Mammary epithelial cell (primary cell): ENCODE measurements at regions of chr2 and their contacts with region 1.

Region 1: GRCh38 chr2:95728878-95729596 is 137.2 kb downstream of the TRIM43 start:
- DNase-seq: peak; percentile 75
- H3K4me3 ChIP-seq: no peak overlapping the region
- H3K27ac ChIP-seq: no peak overlapping the region
- H3K4me1 ChIP-seq: no peaks in the 10 kb centered on the region
- H3K27me3 ChIP-seq: peaks cover 2% of the 10 kb centered on the region
- CTCF ChIP-seq: peak; percentile 44 to 69

Region 2: GRCh38 chr2:95314964-95315611 is 413.9 kb before region 1 on chr2:
- CTCF ChIA-PET with region 1: no interaction called
- dilution Hi-C with region 1: no loop called
- in situ Hi-C with region 1: no loop called
- intact Hi-C with region 1: loop called (anchors 2 kb)
- DNase-seq: peak; percentile 62
- H3K4me3 ChIP-seq: no peak overlapping the region
- H3K27ac ChIP-seq: no peak overlapping the region
- H3K4me1 ChIP-seq: peaks cover 28% of the 10 kb centered on the region
- H3K27me3 ChIP-seq: peaks cover 3% of the 10 kb centered on the region
- CTCF ChIP-seq: peak; percentile 69 to 95

Region 3: DNA sequence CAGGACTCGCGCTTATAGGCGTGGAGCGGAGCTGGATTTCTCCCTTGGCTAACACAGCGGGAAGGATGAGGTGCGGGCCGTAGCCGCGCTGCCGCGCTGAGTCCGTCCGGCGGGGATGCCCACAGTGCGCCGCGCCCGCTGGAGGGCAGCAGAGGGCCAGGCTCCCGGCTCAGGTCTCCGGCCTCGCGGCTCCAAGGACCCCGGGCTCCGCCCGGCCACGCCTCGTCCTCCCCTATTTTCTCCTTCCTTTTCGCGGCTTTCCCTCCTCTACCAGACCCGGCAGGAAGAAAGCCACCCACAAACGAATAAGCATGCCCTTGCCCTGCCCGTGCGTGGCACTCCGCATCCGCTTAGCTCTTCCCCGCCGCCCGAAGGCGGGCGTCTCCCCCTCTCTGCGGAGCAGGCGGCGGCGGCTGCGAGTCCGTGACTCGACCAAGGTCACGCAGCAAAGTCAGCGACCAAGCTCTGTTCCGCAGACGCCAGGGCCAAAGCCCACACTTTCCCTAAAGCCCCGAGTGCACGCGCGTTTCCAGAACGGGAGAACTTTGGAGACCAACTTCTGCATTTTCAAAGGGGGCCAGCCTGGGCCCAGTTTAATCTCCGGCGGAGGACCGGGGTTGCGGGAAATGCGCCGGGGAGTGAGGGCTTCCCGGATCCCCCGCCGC is 383.3 kb before region 1 on chr2:
- CTCF ChIA-PET with region 1: interaction called, 3 read pairs
- dilution Hi-C with region 1: no loop called
- in situ Hi-C with region 1: no loop called
- intact Hi-C with region 1: loop called (anchors 2 kb)
- DNase-seq: peak; percentile 77
- H3K4me3 ChIP-seq: peak overlapping the region; percentile 49 to 69 (median 61)
- H3K27ac ChIP-seq: peak overlapping the region; percentile 10
- H3K4me1 ChIP-seq: peaks cover 41% of the 10 kb centered on the region
- H3K27me3 ChIP-seq: no peaks in the 10 kb centered on the region
- CTCF ChIP-seq: peak; percentile 65 to 91

Region 4: DNA sequence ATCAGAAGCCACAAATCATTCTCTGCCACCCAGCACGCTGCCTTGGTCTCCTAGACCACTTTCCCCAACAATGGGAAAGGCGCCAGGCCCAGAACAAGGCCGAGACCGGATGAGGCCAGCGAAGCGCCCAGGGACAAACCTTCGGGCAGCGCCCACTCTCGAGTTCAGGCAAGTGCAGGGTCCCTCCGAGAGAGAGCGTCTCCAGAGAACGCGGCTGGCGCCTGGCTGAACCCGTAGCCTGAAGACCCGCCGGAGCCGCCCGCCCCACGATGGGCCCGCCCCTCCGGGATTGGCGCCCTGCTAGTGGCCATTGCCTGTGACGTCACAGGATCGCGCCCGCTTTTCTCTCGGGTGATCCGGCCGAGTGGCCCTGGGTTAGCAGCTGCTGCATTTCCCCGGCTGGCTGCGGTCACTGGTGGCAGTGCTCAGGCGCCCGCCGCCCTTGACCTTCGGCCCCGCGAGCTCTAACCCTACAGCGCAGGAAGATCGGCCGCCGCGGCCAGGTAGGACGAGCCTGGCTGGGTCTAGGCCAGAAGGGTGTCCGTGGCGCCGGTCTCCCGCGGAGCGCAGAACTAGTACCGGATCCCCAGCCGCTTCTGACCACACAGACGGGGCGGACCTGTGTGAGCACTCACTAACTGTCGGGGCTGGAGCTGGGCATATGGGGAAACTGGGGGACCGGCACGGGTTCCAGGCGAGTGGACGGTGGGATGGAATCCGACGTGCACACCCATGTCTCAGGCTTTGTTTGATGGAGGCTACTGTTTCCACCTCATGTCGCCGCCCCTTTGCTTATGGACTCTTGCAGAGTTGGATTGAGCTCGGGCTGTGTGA is 326.4 kb before region 1 on chr2 and contains the start of gene FAHD2A:
- CTCF ChIA-PET with region 1: no interaction called
- dilution Hi-C with region 1: no loop called
- in situ Hi-C with region 1: no loop called
- intact Hi-C with region 1: loop called (anchors 5 kb)
- DNase-seq: peak; percentile 85
- H3K4me3 ChIP-seq: peak within 1 kb of the TSS; percentile 93 to 99 (median 96)
- H3K27ac ChIP-seq: peak within 1 kb of the TSS; percentile 75
- H3K4me1 ChIP-seq: peaks cover 10% of the 10 kb centered on the region
- H3K27me3 ChIP-seq: no peaks in the 10 kb centered on the region
- CTCF ChIP-seq: no peak
- total RNA-seq, gene FAHD2A: 23.8 to 26.8 TPM

Region 5: DNA sequence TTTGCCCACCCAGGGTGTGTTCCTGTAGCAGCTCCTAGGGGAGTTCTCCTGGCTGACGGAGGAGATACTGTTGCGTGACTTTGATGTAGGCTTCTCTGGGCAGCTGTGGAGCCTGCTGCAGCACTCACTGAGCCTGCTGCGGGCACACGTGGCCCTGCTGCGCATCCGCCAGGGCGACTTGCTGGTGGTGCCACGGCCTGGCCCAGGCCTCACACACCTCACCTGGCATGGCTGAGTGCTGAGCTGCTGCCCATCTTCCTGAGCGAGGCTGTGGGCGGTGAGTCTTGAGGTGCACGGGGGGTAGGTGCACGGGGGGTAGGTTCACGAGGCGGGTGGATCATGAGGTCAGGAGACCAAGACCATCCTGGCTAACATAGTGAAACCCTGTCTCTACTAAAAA is 70.9 kb after region 1 on chr2:
- CTCF ChIA-PET with region 1: no interaction called
- dilution Hi-C with region 1: no loop called
- in situ Hi-C with region 1: no loop called
- intact Hi-C with region 1: no loop called
- DNase-seq: no peak
- H3K4me3 ChIP-seq: no peak overlapping the region
- H3K27ac ChIP-seq: no peak overlapping the region
- H3K4me1 ChIP-seq: no peaks in the 10 kb centered on the region
- H3K27me3 ChIP-seq: no peaks in the 10 kb centered on the region
- CTCF ChIP-seq: no peak